AG04450 (cell line): ENCODE measurements at regions of chr20 and their contacts with region 1.

Region 1: GRCh38 chr20:52448513-52449250 is 257.1 kb upstream of the ZFP64 start:
- DNase-seq: no peak
- H3K4me3 ChIP-seq: no peak overlapping the region
- H3K27ac ChIP-seq: no peak overlapping the region
- H3K27me3 ChIP-seq: no peaks in the 10 kb centered on the region
- CTCF ChIP-seq: no peak

Region 2: DNA sequence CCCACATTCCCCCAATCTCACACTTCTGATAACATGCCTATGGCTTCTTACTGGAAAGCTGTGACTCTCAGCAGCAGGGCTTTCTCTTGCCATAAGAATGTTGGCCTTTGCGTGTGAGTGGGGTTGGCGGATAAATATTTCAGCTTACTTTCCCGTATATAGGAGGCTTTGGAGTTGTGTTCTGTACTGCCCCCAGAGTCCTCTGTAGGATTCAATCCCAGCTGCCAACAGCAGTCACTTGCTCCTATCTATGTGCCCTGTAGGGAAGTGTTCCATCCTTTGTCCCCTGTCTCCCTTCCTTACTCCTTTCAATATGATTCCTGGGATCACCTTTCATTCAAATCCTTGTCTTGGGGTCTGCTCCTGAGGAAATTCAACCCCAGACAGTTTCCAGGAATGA is 65.1 kb after region 1 on chr20:
- CTCF ChIA-PET with region 1: interaction called, 10 read pairs
- POLR2A ChIA-PET with region 1: no interaction called
- DNase-seq: no peak
- H3K4me3 ChIP-seq: no peak overlapping the region
- H3K27ac ChIP-seq: no peak overlapping the region
- H3K27me3 ChIP-seq: no peaks in the 10 kb centered on the region
- CTCF ChIP-seq: no peak